Breast epithelium (tissue), 4 donors: ENCODE measurements at regions of chr20 and their contacts with region 1.

Region 1: DNA sequence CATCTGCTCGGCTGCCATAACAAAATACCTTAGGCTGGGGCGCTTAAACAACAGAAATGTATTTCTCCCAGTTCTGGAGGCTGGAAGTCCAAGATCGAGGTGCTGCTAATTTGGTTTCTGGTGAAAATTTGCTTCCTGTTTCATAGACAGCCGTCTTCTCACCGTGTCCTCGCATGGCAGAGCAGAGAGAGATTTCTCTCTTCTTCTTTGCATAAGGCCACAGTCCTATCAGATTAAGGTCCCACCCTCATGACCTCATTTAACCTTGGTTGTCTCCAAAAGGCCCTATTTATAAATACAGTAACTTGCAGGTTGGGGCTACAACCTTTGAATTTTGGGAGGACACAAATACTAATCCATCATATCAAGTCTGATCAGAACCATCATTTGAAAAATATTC is 544.3 kb downstream of the KIF16B start:
- DNase-seq: no peak
- H3K4me3 ChIP-seq: no peak overlapping the region
- H3K27ac ChIP-seq: no peak overlapping the region
- H3K4me1 ChIP-seq: no peaks in the 10 kb centered on the region
- H3K27me3 ChIP-seq: no peaks in the 10 kb centered on the region
- CTCF ChIP-seq: no peak
- POLR2A ChIP-seq: no peak

Region 2: DNA sequence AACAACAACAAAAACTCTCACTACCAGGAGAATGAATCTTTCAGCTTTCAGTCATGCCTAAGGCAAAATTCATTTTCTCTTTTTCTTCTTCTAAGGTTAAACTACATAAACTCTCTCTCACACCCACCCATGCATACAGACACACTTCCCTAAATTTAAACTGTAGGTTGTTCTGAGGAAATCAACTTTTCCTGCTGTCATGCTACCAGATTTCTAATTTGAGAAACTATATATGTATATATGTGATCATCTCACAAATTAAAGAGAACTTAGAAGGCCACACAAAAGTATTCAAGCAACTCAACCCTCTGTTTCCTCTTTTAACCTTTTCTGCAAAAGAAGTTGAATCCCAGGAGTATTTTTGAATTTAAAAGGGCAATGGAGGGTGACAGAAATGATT is 11.8 kb after region 1 on chr20:
- intact Hi-C with region 1: loop called (anchors 1 kb)
- DNase-seq: no peak
- H3K4me3 ChIP-seq: no peak overlapping the region
- H3K27ac ChIP-seq: no peak overlapping the region
- H3K4me1 ChIP-seq: no peaks in the 10 kb centered on the region
- H3K27me3 ChIP-seq: no peaks in the 10 kb centered on the region
- CTCF ChIP-seq: no peak
- POLR2A ChIP-seq: no peak

Region 3: DNA sequence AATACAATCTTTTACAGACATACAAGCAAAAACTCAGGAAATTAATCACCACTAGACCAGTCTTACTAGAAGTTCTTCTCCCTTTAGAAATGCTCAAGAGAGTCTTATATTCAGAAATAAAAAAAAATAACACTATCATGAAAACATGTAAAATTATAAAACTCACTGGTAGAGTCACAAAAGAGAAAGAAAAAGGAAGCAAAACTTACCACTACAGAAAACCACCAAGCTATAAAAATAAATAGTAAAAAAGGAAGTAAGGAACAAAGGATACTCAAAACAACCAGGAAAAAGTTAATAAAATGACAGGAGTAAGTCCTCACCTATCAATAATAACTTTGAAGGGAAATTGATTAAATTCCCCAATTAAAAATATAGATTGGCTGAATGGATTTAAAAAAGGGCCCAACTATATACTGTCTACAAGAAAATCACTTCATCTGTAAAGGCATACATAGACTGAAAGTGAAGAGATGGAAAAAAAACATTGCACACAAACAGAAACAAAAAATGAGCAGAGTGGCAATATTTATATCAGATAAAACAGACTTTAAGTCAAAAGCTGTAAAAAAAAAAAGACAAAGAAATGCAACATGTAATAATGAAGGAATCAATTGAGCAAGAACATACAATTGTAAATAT is 54.8 kb after region 1 on chr20:
- intact Hi-C with region 1: loop called (anchors 2 kb)
- DNase-seq: no peak
- H3K4me3 ChIP-seq: no peak overlapping the region
- H3K27ac ChIP-seq: no peak overlapping the region
- H3K4me1 ChIP-seq: no peaks in the 10 kb centered on the region
- H3K27me3 ChIP-seq: no peaks in the 10 kb centered on the region
- CTCF ChIP-seq: no peak
- POLR2A ChIP-seq: no peak